Upper lobe of right lung (tissue), 1 donor: ENCODE measurements at regions of chr1 and their contacts with region 1.

Region 1: GRCh38 chr1:45018599-45019230 is 6.7 kb downstream of the UROD start:
- DNase-seq: peak; percentile 80
- ATAC-seq: peak; percentile 93
- H3K4me3 ChIP-seq: no peak overlapping the region
- H3K27ac ChIP-seq: no peak overlapping the region
- H3K4me1 ChIP-seq: peaks cover under 1% of the 10 kb centered on the region
- H3K27me3 ChIP-seq: no peaks in the 10 kb centered on the region
- CTCF ChIP-seq: peak; percentile 80

Region 2: GRCh38 chr1:44962729-44963128 is 56.0 kb before region 1 on chr1:
- intact Hi-C with region 1: no loop called
- DNase-seq: no peak
- ATAC-seq: no peak
- H3K4me3 ChIP-seq: no peak overlapping the region
- H3K27ac ChIP-seq: no peak overlapping the region
- H3K4me1 ChIP-seq: no peaks in the 10 kb centered on the region
- H3K27me3 ChIP-seq: no peaks in the 10 kb centered on the region
- CTCF ChIP-seq: no peak

Region 3: DNA sequence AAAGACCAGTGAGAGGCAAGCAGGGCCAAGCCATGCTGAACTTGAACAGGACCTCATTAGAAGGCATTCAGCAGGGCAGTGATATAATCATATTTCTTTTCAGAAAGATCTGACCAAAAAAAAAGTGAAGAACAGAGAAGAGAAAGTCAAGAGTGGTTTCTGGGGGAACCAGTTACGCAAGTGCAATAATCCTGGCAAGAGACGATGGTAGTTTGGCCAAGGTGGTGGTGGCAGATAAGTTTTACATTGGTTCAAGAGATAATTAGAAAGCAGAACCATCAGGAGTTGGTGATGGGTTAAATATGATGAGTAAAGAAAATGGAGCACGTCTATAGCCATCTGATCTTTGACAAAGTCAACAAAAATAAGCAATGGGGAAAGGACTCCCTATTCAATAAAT is 133.4 kb after region 1 on chr1:
- intact Hi-C with region 1: no loop called
- DNase-seq: no peak
- ATAC-seq: no peak
- H3K4me3 ChIP-seq: no peak overlapping the region
- H3K27ac ChIP-seq: no peak overlapping the region
- H3K4me1 ChIP-seq: no peaks in the 10 kb centered on the region
- H3K27me3 ChIP-seq: no peaks in the 10 kb centered on the region
- CTCF ChIP-seq: no peak

Region 4: DNA sequence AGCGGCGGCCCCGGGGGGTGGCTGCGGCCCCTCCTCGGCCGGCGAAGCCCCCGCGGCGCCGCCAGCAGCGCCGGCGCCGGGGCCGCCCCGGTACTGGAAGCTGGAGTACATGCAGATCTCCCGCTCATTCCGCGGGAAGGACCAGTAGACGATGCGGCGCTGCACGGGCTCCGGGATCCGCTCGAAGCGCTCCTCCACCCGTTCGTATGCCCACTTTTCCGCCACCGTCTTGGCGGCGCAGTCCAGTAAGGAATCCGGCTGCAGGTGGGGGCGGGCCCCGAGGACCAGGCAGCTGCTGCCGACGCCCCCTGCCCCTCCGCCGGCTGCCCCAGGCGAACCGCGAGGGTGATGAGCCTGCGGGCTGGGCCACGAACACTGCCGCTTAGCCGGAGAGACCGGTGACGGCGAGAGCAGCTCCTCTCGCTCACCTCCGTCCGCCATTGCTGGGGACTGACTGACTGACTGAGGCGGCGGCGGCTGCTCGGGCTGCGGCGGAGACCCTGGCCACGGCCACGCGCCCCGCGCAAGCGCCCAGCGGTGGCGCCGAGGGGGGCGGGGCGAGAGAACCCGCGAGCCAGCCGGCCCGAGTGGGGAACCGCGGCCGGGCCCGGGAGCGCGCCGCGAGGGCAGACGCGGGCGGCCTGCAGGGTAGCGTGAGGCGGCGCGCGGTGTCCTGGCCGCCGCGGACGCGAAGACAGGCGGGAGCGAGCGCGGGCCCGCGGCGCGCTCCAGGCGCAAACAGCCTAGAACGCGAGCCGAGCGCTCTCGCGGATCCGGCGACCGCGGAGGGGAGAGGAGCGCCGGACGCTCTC is 187.4 kb after region 1 on chr1 and contains the start of gene ZSWIM5:
- intact Hi-C with region 1: no loop called
- DNase-seq: peak; percentile 88
- ATAC-seq: peak; percentile 96
- H3K4me3 ChIP-seq: peak within 1 kb of the TSS; percentile 83
- H3K27ac ChIP-seq: peak within 1 kb of the TSS; percentile 85
- H3K4me1 ChIP-seq: peaks cover 7% of the 10 kb centered on the region
- H3K27me3 ChIP-seq: no peaks in the 10 kb centered on the region
- CTCF ChIP-seq: no peak
- total RNA-seq, gene ZSWIM5: 4.1 TPM

Region 5: GRCh38 chr1:45299981-45300668 is 281.4 kb after region 1 on chr1:
- intact Hi-C with region 1: loop called (anchors 5 kb)
- DNase-seq: no peak
- ATAC-seq: peak; percentile 16
- H3K4me3 ChIP-seq: no peak overlapping the region
- H3K27ac ChIP-seq: no peak overlapping the region
- H3K4me1 ChIP-seq: peaks cover 11% of the 10 kb centered on the region
- H3K27me3 ChIP-seq: no peaks in the 10 kb centered on the region
- CTCF ChIP-seq: peak; percentile 82